ENCODE measurements at regions of chr11 and their contacts with region 1.

Region 1: GRCh38 chr11:94519478-94520084 is 7.3 kb downstream of the C11orf97 start:
- DNase-seq: peak in 1 of 2 donors; percentile 64
- ATAC-seq: peak; percentile 51 to 57 (median 53)
- H3K4me3 ChIP-seq: no peak overlapping the region
- H3K4me3 Mint-ChIP-seq: no peak overlapping the region
- H3K27ac ChIP-seq: no peak overlapping the region
- H3K27ac Mint-ChIP-seq: no peak overlapping the region
- H3K4me1 ChIP-seq: no peaks in the 10 kb centered on the region
- H3K4me1 Mint-ChIP-seq: no peaks in the 10 kb centered on the region
- H3K27me3 ChIP-seq: no peaks in the 10 kb centered on the region
- H3K27me3 Mint-ChIP-seq: peaks cover 8 to 22% of the 10 kb centered on the region in 2 donors
- CTCF ChIP-seq: peak; percentile 80

Region 2: GRCh38 chr11:94602430-94603372 is 83.1 kb after region 1 on chr11:
- intact Hi-C with region 1: loop called (anchors 1 kb)
- DNase-seq: peak; percentile 22 to 57
- ATAC-seq: peak; percentile 60 to 73 (median 62)
- H3K4me3 ChIP-seq: no peak overlapping the region
- H3K4me3 Mint-ChIP-seq: no peak overlapping the region
- H3K27ac ChIP-seq: no peak overlapping the region
- H3K27ac Mint-ChIP-seq: no peak overlapping the region
- H3K4me1 ChIP-seq: no peaks in the 10 kb centered on the region
- H3K4me1 Mint-ChIP-seq: no peaks in the 10 kb centered on the region
- H3K27me3 ChIP-seq: no peaks in the 10 kb centered on the region
- H3K27me3 Mint-ChIP-seq: no peaks in the 10 kb centered on the region
- CTCF ChIP-seq: peak; percentile 41

Region 3: GRCh38 chr11:94897330-94897768 is 377.8 kb after region 1 on chr11:
- intact Hi-C with region 1: loop called (anchors 1 kb)
- DNase-seq: peak in 1 of 2 donors; percentile 52
- ATAC-seq: peak in 2 of 3 donors; percentile 65 to 72
- H3K4me3 ChIP-seq: no peak overlapping the region
- H3K4me3 Mint-ChIP-seq: no peak overlapping the region
- H3K27ac ChIP-seq: no peak overlapping the region
- H3K27ac Mint-ChIP-seq: no peak overlapping the region
- H3K4me1 ChIP-seq: no peaks in the 10 kb centered on the region
- H3K4me1 Mint-ChIP-seq: no peaks in the 10 kb centered on the region
- H3K27me3 ChIP-seq: no peaks in the 10 kb centered on the region
- H3K27me3 Mint-ChIP-seq: no peaks in the 10 kb centered on the region
- CTCF ChIP-seq: peak; percentile 93

Region 4: DNA sequence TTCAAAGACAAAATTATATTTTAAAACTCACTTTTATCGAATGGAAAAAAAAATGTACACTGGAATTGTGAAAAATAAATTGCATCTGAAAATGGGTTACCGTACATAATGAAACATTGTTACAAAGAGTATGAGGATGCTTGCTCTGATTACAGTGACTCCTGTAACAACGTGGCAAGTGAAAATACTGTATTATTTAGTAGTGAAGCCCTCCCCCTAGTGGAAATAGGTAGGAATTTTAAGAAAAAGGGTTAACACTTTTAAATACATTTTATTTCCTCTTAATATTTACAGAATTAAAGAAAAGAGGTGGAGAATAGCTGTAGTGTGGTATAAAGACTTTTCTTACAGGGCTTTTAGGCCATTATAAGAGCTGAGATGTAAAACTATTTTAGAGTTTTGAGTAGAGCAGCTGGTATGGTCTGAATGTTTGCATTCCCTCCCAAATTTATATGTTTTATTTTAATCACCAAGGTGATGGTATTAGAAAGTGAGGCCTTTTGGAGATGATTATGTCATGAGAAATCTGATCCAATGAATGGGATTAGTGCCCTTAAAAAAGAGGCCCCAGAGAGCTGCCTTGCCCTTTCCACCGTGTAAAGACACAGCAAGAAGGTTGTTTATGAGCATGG is 1244.8 kb after region 1 on chr11:
- intact Hi-C with region 1: loop called (anchors 5 kb)
- DNase-seq: peak in 1 of 2 donors; percentile 76
- ATAC-seq: peak; percentile 74 to 90 (median 77)
- H3K4me3 ChIP-seq: no peak overlapping the region
- H3K4me3 Mint-ChIP-seq: no peak overlapping the region
- H3K27ac ChIP-seq: no peak overlapping the region
- H3K27ac Mint-ChIP-seq: no peak overlapping the region
- H3K4me1 ChIP-seq: no peaks in the 10 kb centered on the region
- H3K4me1 Mint-ChIP-seq: no peaks in the 10 kb centered on the region
- H3K27me3 ChIP-seq: no peaks in the 10 kb centered on the region
- H3K27me3 Mint-ChIP-seq: peaks cover 8 to 30% of the 10 kb centered on the region in 2 donors
- CTCF ChIP-seq: peak; percentile 80

Region 5: DNA sequence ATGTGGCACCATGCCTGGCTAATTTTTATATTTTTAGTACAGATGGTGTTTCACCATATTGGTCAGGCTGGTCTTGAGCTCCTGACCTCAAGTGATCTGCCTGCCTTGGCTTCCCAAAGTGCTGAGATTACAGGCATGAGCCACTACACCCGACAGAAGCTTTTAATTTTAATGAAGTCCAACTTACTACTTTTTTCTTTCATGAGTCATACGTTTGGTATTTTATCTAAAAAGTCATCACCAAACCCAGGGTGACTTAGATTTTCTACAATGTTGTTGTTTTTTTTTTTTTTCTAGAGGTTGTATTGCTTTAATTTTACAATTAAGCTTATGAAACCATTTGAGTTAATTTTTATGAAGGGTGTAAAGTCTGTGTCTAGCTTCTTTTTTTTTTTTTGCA is 1905.1 kb after region 1 on chr11:
- intact Hi-C with region 1: loop called (anchors 5 kb)
- DNase-seq: no peak
- ATAC-seq: no peak
- H3K4me3 ChIP-seq: no peak overlapping the region
- H3K4me3 Mint-ChIP-seq: no peak overlapping the region
- H3K27ac ChIP-seq: no peak overlapping the region
- H3K27ac Mint-ChIP-seq: no peak overlapping the region
- H3K4me1 ChIP-seq: no peaks in the 10 kb centered on the region
- H3K4me1 Mint-ChIP-seq: no peaks in the 10 kb centered on the region
- H3K27me3 ChIP-seq: peaks cover 13% of the 10 kb centered on the region
- H3K27me3 Mint-ChIP-seq: peaks cover 27 to 60% of the 10 kb centered on the region in 2 donors
- CTCF ChIP-seq: no peak

Measured in natural killer cell (primary cell).